Dendritic cell treated with granulocyte-macrophage colony-stimulating factor and Interleukin-4, amounts not matched to agents 40 ng/mL and 50 ng/mL, for 4 days (primary cell): ENCODE measurements at regions of chrX and their contacts with region 1.

Region 1: DNA sequence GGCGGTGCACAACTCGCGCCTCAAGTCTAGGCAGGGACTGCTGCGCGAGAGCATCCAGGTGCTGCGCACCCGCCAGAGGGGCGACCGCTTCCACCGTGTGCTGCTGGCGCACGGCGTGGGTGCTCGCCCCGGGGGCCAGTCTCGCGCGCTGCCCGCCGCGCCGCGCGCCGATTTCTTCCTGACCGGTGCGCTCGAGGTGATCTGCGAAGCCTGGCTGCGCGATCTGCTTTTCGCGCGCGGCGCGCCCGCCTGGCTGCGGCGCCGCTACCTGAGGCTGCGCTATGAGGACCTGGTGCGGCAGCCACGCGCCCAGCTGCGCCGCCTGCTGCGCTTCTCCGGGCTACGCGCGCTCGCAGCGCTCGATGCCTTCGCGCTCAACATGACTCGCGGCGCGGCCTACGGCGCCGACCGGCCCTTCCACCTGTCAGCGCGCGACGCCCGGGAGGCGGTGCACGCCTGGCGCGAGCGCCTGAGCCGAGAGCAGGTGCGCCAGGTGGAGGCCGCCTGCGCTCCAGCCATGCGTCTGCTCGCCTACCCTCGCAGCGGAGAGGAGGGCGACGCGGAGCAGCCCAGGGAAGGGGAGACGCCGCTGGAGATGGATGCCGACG is 1.3 kb downstream of the CHST7 start:
- H3K4me3 Mint-ChIP-seq: peak overlapping the region; percentile 84
- H3K27ac Mint-ChIP-seq: peak overlapping the region; percentile 48
- H3K4me1 Mint-ChIP-seq: peaks cover 54% of the 10 kb centered on the region
- H3K27me3 Mint-ChIP-seq: peaks cover 4% of the 10 kb centered on the region

Region 2: DNA sequence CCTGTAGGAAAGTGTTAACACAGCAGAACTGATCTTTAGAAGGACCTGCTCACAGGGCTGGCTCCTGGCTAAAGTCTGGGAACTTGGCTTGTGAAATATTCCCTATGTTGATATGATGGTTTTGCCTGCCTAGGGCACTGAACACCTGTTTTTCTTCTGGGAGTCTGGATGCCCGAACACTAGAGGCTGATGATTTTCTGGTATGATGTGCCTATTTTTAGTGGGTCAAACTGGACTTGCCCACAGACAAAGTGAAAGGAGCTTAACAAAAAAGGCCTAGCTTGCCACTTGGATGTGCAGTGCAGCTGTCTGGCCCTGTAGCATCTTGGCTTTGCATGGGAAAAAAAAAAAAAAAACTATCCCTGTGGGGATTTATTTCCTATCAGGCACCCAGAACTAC is 68.8 kb before region 1 on chrX:
- intact Hi-C with region 1: no loop called
- H3K4me3 Mint-ChIP-seq: no peak overlapping the region
- H3K27ac Mint-ChIP-seq: no peak overlapping the region
- H3K4me1 Mint-ChIP-seq: no peaks in the 10 kb centered on the region
- H3K27me3 Mint-ChIP-seq: no peaks in the 10 kb centered on the region

Region 3: GRCh38 chrX:46627711-46628419 is 53.0 kb after region 1 on chrX:
- intact Hi-C with region 1: loop called (anchors 2 kb)
- H3K4me3 Mint-ChIP-seq: no peak overlapping the region
- H3K27ac Mint-ChIP-seq: peak overlapping the region; percentile 90
- H3K4me1 Mint-ChIP-seq: peaks cover 35% of the 10 kb centered on the region
- H3K27me3 Mint-ChIP-seq: no peaks in the 10 kb centered on the region

Region 4: GRCh38 chrX:46642145-46642544 is 67.3 kb after region 1 on chrX:
- intact Hi-C with region 1: loop called (anchors 5 kb)
- H3K4me3 Mint-ChIP-seq: no peak overlapping the region
- H3K27ac Mint-ChIP-seq: no peak overlapping the region
- H3K4me1 Mint-ChIP-seq: peaks cover 7% of the 10 kb centered on the region
- H3K27me3 Mint-ChIP-seq: no peaks in the 10 kb centered on the region

Region 5: GRCh38 chrX:46796574-46797191 is 221.8 kb after region 1 on chrX:
- intact Hi-C with region 1: loop called (anchors 5 kb)
- H3K4me3 Mint-ChIP-seq: no peak overlapping the region
- H3K27ac Mint-ChIP-seq: no peak overlapping the region
- H3K4me1 Mint-ChIP-seq: peaks cover 11% of the 10 kb centered on the region
- H3K27me3 Mint-ChIP-seq: no peaks in the 10 kb centered on the region